Vagina (tissue), 2 donors: ENCODE measurements at regions of chr6 and their contacts with region 1.

Region 1: DNA sequence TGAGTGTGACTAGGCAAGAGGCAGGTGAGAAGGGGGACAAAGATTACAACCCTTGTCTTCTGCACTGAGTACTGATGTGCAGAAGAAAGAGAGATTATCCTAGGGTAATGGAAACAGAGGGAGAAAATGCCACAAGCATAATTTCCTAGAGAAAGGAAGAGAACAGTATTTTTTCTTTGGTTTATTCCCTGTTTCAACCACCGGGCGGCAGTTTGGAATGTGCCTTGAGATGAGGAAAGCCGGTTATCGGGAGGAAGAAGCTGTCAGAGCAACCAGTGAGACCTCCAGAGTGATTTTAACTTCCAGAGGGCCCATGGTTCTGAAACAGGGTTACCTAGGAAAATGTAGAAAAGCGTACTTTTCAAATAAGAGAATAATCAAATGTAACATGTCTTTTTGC is 121.4 kb downstream of the REV3L start:
- DNase-seq: no peak
- H3K4me3 ChIP-seq: no peak overlapping the region
- H3K27ac ChIP-seq: no peak overlapping the region
- H3K4me1 ChIP-seq: no peaks in the 10 kb centered on the region
- H3K27me3 ChIP-seq: no peaks in the 10 kb centered on the region
- CTCF ChIP-seq: peak in 1 of 3 experiments; percentile 41
- POLR2A ChIP-seq: no peak

Region 2: GRCh38 chr6:111462770-111463391 is 101.2 kb after region 1 on chr6:
- intact Hi-C with region 1: loop called (anchors 10 kb)
- DNase-seq: no peak
- H3K4me3 ChIP-seq: no peak overlapping the region
- H3K27ac ChIP-seq: peak overlapping the region; percentile 64
- H3K4me1 ChIP-seq: peaks cover 17% of the 10 kb centered on the region
- H3K27me3 ChIP-seq: no peaks in the 10 kb centered on the region
- CTCF ChIP-seq: no peak
- POLR2A ChIP-seq: no peak